ENCODE measurements at regions of chr6 and their contacts with region 1.

Region 1: GRCh38 chr6:117602151-117602898 is at the start of gene GOPC:
- DNase-seq: peak; percentile 93
- ATAC-seq: peak; percentile 93
- H3K4me3 ChIP-seq: peak within 1 kb of the TSS; percentile 94
- H3K27ac ChIP-seq: peak within 1 kb of the TSS; percentile 79
- H3K4me1 ChIP-seq: peaks cover 3% of the 10 kb centered on the region; the same call in 1 of the 2 replicates
- H3K27me3 ChIP-seq: no peaks in the 10 kb centered on the region
- CTCF ChIP-seq: peak in 1 of 3 experiments; percentile 16; a peak in 1 of 6 replicates
- EP300 ChIP-seq: no peak
- POLR2A ChIP-seq: peak; percentile 98
- RAD21 ChIP-seq: no peak
- polyA plus RNA-seq, gene GOPC: 5.8 to 8.2 TPM

Region 2: GRCh38 chr6:117346142-117346930 is 256.0 kb before region 1 on chr6:
- CTCF ChIA-PET with region 1: interaction called, 12 read pairs
- POLR2A ChIA-PET with region 1: no interaction called
- RAD21 ChIA-PET with region 1: no interaction called
- SMC1A ChIA-PET with region 1: interaction called, 4 read pairs
- in situ Hi-C with region 1: no loop called
- intact Hi-C with region 1: loop called (anchors 1 kb)
- DNase-seq: no peak
- ATAC-seq: peak; percentile 63
- H3K4me3 ChIP-seq: no peak overlapping the region
- H3K27ac ChIP-seq: no peak overlapping the region
- H3K4me1 ChIP-seq: no peaks in the 10 kb centered on the region
- H3K27me3 ChIP-seq: no peaks in the 10 kb centered on the region; a peak in 1 of 4 replicates
- CTCF ChIP-seq: peak in 2 of 3 experiments; percentile 29 to 35; a peak in 3 of 6 replicates
- EP300 ChIP-seq: no peak
- POLR2A ChIP-seq: no peak
- RAD21 ChIP-seq: 0 out of 2 replicates have a peak, but pooled peaks have one; percentile 14

Region 3: GRCh38 chr6:117444600-117444999 is 157.7 kb before region 1 on chr6:
- CTCF ChIA-PET with region 1: interaction called, 121 read pairs
- POLR2A ChIA-PET with region 1: no interaction called
- RAD21 ChIA-PET with region 1: interaction called, 71 read pairs
- SMC1A ChIA-PET with region 1: interaction called, 61 read pairs
- in situ Hi-C with region 1: no loop called
- intact Hi-C with region 1: no loop called
- DNase-seq: no peak
- ATAC-seq: no peak
- H3K4me3 ChIP-seq: no peak overlapping the region
- H3K27ac ChIP-seq: no peak overlapping the region
- H3K4me1 ChIP-seq: no peaks in the 10 kb centered on the region
- H3K27me3 ChIP-seq: no peaks in the 10 kb centered on the region
- CTCF ChIP-seq: no peak
- EP300 ChIP-seq: no peak
- POLR2A ChIP-seq: no peak
- RAD21 ChIP-seq: no peak

Region 4: GRCh38 chr6:117482240-117483003 is 119.9 kb before region 1 on chr6 and contains the start of gene DCBLD1:
- CTCF ChIA-PET with region 1: interaction called, 111 read pairs
- POLR2A ChIA-PET with region 1: interaction called, 14 read pairs
- RAD21 ChIA-PET with region 1: interaction called, 56 read pairs
- SMC1A ChIA-PET with region 1: interaction called, 128 read pairs
- in situ Hi-C with region 1: no loop called
- intact Hi-C with region 1: loop called (anchors 2 kb)
- DNase-seq: no peak
- ATAC-seq: peak; percentile 86
- H3K4me3 ChIP-seq: peak within 1 kb of the TSS; percentile 81
- H3K27ac ChIP-seq: peak within 1 kb of the TSS; percentile 66
- H3K4me1 ChIP-seq: peaks cover 19% of the 10 kb centered on the region
- H3K27me3 ChIP-seq: no peaks in the 10 kb centered on the region
- CTCF ChIP-seq: 0 out of 6 replicates have a peak, but pooled peaks of 1 of the 3 experiments have one; percentile 3
- EP300 ChIP-seq: no peak
- POLR2A ChIP-seq: peak; percentile 69
- RAD21 ChIP-seq: no peak
- polyA plus RNA-seq, gene DCBLD1: 0.92 to 2.6 TPM

Region 5: DNA sequence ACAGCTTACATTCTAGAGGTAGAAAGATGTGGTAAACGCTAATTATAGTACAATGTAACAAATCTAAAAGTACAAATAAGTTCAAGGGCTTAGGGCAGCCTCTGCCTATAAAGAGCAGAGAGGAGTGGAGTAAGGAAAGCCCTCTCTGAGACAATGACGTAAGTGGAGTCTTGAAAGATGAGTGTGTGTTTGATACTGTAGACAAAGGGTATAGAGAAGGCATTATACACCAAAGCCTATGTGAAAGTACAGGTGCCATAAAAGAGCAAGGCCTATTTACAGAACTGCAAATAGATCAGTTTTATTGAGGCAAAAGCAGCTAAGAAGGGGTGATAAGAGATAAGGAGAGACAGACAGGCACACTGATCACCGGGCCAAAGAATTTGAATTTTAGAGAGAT is 10.9 kb before region 1 on chr6:
- CTCF ChIA-PET with region 1: interaction called, 11 read pairs
- POLR2A ChIA-PET with region 1: interaction called, 5 read pairs
- RAD21 ChIA-PET with region 1: interaction called, 8 read pairs
- SMC1A ChIA-PET with region 1: interaction called, 7 read pairs
- in situ Hi-C with region 1: no loop called
- intact Hi-C with region 1: no loop called
- DNase-seq: no peak
- ATAC-seq: no peak
- H3K4me3 ChIP-seq: no peak overlapping the region
- H3K27ac ChIP-seq: no peak overlapping the region
- H3K4me1 ChIP-seq: no peaks in the 10 kb centered on the region
- H3K27me3 ChIP-seq: no peaks in the 10 kb centered on the region
- CTCF ChIP-seq: no peak
- EP300 ChIP-seq: no peak
- POLR2A ChIP-seq: no peak
- RAD21 ChIP-seq: no peak

Region 6: DNA sequence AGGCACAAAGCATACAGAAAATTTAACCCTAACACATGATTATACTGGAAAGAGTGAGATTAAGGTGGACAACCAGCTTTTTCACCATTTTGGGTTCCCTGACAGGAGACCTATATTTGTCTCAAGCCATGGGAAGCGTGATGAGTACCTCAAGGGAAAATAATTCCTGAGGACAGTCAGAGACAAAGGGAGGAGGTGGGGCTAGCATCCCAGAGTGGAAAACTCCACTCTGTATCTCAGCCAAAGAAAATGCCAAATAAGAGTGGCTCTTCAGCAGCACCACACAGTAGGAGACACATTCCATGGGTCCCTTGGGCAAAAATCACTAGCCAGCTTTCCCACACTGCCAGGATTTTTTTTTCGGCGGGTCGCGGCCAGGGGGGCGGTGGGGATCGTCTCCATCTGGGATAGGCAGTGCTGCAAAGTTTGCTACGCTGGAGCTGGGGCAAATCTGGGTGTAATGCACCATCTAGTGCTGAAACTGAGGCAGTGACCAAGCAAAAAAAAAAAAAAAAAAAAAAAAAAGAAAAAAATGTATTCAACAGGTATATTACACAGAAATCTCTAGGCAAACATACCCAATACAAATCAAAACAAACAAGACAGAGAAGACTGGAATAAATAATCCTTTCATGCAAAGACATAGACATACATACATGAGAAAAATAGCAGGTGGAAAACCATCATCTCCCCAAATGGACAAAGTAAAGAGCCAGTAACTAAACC is 227.4 kb after region 1 on chr6:
- CTCF ChIA-PET with region 1: interaction called, 6 read pairs
- POLR2A ChIA-PET with region 1: no interaction called
- RAD21 ChIA-PET with region 1: no interaction called
- SMC1A ChIA-PET with region 1: interaction called, 3 read pairs
- in situ Hi-C with region 1: no loop called
- intact Hi-C with region 1: loop called (anchors 5 kb)
- DNase-seq: no peak
- ATAC-seq: peak; percentile 57
- H3K4me3 ChIP-seq: no peak overlapping the region
- H3K27ac ChIP-seq: no peak overlapping the region
- H3K4me1 ChIP-seq: no peaks in the 10 kb centered on the region
- H3K27me3 ChIP-seq: no peaks in the 10 kb centered on the region
- CTCF ChIP-seq: peak; percentile 43 to 56 (median 45); a peak in 5 of 6 replicates
- EP300 ChIP-seq: no peak
- POLR2A ChIP-seq: no peak
- RAD21 ChIP-seq: peak; percentile 72

Measured in GM12878 (cell line).